H1 (cell line): ENCODE measurements at regions of chr12 and their contacts with region 1.

Region 1: GRCh38 chr12:66169221-66170170 is at the start of gene TMBIM4:
- DNase-seq: peak; percentile 69 to 72
- H3K4me3 ChIP-seq: peak within 1 kb of the TSS; percentile 59 to 84 (median 63)
- H3K27ac ChIP-seq: peak within 1 kb of the TSS; percentile 87
- H3K4me1 ChIP-seq: no peaks in the 10 kb centered on the region; a peak in 1 of 7 replicates
- H3K27me3 ChIP-seq: no peaks in the 10 kb centered on the region
- CTCF ChIP-seq: peak; percentile 21 to 40 (median 23); a peak in 3 of 4 replicates
- EP300 ChIP-seq: no peak
- POLR2A ChIP-seq: peak in 1 of 2 experiments; percentile 40; a peak in 1 of 3 replicates
- RAD21 ChIP-seq: peak in 1 of 2 experiments; percentile 36; a peak in 3 of 4 replicates
- total RNA-seq, gene TMBIM4: 12.8 and 15.5 TPM in 2 replicates

Region 2: GRCh38 chr12:66130277-66131066 is 39.0 kb before region 1 on chr12 and contains the start of gene LLPH:
- CTCF ChIA-PET with region 1: interaction called, 5 read pairs
- POLR2A ChIA-PET with region 1: interaction called, 11 read pairs
- DNase-seq: peak; percentile 82 to 88
- H3K4me3 ChIP-seq: peak within 1 kb of the TSS; percentile 80 to 95 (median 84)
- H3K27ac ChIP-seq: peak within 1 kb of the TSS; percentile 76
- H3K4me1 ChIP-seq: 0 out of 7 replicates have a peak, but pooled peaks cover 0 to 3% (median 0%) of the 10 kb centered on the region in 4 experiments
- H3K27me3 ChIP-seq: no peaks in the 10 kb centered on the region
- CTCF ChIP-seq: no peak
- EP300 ChIP-seq: no peak
- POLR2A ChIP-seq: peak in 1 of 2 experiments; percentile 83; a peak in 2 of 3 replicates
- RAD21 ChIP-seq: no peak
- total RNA-seq, gene LLPH: 29.9 and 31.3 TPM in 2 replicates

Region 3: DNA sequence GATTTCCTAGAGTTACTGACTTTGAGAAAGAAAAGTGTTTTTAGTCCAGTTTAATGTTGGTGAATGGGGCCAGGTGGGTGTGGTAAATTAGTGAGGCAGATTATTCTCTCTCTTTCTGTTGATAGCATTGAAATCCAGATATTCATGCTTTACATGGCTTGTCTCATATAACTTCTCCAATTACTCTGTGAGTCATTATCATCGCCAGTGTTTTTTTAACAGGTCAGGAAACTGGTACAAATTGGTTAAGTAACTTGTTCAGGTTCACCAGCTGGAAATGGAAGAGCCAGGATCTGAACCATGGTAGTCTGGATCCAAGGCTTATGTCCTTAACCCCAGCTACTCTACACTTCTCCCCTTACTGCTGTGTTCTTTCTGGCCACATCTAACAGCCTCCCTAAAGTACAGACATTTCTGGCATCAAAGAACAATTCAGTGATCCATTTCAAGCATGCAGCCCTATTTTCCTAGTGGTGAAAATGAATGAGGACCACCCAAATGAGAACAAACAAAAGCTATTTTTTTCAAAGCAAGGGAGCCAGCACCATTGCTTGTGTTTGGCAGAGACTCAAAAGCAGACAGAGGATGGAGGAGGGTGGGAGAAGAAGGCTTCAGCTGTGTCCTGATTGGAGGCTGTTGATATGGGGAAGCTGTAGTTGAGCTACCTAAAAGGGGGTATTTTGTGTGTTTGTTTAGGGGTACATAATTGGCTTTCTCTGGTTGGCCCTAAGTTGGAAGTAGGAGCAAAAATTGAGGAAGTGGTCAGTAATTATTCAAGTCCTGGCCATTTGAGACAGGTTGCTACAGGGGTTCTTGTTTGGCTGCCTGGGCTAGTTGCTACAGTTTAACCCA is 21.2 kb after region 1 on chr12:
- CTCF ChIA-PET with region 1: interaction called, 8 read pairs
- POLR2A ChIA-PET with region 1: interaction called, 11 read pairs
- DNase-seq: no peak
- H3K4me3 ChIP-seq: no peak overlapping the region
- H3K27ac ChIP-seq: no peak overlapping the region
- H3K4me1 ChIP-seq: peaks cover 0 to 4% (median 1%) of the 10 kb centered on the region in 4 experiments; a peak in 3 of 7 replicates
- H3K27me3 ChIP-seq: peaks cover 9 to 29% (median 25%) of the 10 kb centered on the region in 4 experiments
- CTCF ChIP-seq: no peak
- EP300 ChIP-seq: no peak
- POLR2A ChIP-seq: no peak
- RAD21 ChIP-seq: no peak